Endothelial cell of umbilical vein (primary cell): ENCODE measurements at regions of chrX and their contacts with region 1.

Region 1: DNA sequence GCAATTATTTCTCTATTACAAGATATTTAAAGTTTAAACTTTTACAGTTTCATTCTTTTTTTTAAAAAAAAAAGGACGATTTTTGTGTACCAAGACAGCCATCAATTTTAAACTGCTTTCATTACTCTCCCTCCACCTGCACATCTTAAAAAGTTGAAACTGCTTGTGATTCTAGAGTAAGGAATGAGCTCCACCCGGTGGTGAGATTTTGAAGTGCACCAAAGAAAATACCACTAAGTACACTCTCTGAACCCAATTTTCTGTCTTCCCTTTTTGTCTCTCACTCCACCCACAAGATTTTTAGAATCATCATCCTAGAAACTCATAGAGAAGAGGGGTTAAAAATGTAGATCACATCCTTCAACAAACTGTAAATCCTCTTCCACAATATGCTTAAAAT is 91.3 kb upstream of the WDR44 start:
- DNase-seq: peak; percentile 44
- H3K4me3 ChIP-seq: no peak overlapping the region
- H3K27ac ChIP-seq: no peak overlapping the region
- H3K4me1 ChIP-seq: no peaks in the 10 kb centered on the region
- H3K27me3 ChIP-seq: no peaks in the 10 kb centered on the region
- CTCF ChIP-seq: peak; percentile 13 to 50
- POLR2A ChIP-seq: no peak

Region 2: DNA sequence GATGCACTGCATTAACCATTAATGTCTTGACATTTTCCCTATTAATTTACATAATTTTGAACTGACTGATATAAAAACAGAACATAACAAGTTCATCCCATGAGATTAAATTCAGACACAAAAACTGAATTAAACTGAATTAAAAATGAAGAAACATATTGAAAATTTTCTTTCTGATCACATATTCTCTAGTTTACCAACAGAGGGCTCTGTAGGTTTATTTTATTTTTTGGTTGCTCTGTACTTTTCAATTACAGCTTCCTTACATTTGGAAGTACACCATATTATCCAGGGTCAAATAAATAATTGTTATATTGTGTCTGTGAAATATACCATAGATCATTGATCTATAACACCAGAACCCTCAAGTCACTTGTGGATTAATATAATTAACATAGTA is 1764.5 kb before region 1 on chrX:
- CTCF ChIA-PET with region 1: interaction called, 37 read pairs
- POLR2A ChIA-PET with region 1: no interaction called
- dilution Hi-C with region 1: no loop called
- intact Hi-C with region 1: loop called (anchors 1 kb)
- DNase-seq: peak; percentile 1
- H3K4me3 ChIP-seq: no peak overlapping the region
- H3K27ac ChIP-seq: no peak overlapping the region
- H3K4me1 ChIP-seq: no peaks in the 10 kb centered on the region
- H3K27me3 ChIP-seq: no peaks in the 10 kb centered on the region
- CTCF ChIP-seq: no peak
- POLR2A ChIP-seq: no peak

Region 3: DNA sequence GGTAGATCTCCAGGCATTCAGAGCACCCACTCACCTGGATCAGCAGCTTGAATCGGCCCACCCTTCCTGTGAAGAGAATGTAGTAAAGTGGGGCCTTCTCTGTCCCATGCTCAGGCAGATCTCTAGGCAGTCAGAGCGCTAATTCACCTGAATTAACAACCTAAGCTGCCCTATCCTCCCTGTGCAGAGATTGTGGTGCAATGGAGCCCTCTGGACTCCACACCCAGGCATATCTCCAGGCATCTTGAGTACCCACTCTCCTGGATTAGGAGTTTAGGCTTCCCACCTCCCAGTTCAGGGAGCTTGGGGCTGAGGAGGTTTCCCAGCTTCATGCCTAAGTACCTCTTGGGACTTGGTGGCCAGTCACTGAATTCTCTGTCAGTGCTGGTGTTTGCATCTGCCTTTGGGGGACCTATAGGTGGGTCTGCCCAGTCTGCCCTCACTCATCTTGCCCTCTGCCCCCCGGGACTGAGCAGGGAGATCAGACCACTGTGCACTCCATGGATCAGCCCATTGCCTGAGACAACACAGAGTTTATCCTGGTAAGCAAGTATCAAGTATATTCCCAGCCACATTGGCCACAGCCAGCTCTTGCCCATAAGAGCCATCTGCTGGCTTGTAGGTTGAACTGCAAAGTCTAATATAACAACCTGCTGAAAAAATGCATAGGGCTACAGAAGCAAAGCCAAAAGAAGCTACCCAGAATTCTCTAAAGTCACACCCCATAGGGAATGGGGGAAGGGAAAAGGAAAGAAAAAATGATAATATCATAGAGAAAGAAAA is 511.0 kb before region 1 on chrX:
- CTCF ChIA-PET with region 1: no interaction called
- POLR2A ChIA-PET with region 1: no interaction called
- dilution Hi-C with region 1: no loop called
- intact Hi-C with region 1: no loop called
- DNase-seq: no peak
- H3K4me3 ChIP-seq: no peak overlapping the region
- H3K27ac ChIP-seq: no peak overlapping the region
- H3K4me1 ChIP-seq: no peaks in the 10 kb centered on the region
- H3K27me3 ChIP-seq: no peaks in the 10 kb centered on the region
- CTCF ChIP-seq: no peak
- POLR2A ChIP-seq: no peak

Region 4: DNA sequence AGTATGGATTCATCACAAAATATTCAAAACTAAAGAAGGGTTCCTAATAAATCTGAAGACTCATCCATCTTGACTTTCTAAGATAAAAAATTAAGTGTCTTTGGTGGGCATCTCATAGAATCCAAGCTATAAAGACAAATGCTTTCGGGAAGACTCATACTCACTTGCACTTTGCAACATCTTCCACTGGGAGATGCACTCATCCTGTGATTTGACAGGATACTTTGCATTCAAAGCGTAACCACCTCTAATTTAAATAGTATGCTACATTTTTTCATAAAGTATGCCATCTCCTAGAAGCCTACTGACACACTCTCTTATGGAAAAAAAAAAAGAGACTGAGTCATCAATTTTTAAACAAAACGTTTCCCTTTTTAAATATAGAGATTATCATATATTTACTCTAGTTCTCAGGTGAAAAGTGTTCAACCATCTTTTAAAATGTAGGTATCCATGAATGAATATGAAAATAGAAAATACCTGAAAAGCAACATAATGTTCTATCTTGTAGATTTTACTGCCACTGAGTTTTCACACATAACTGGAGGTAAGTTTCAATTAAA is 257.6 kb before region 1 on chrX:
- CTCF ChIA-PET with region 1: interaction called, 16 read pairs
- POLR2A ChIA-PET with region 1: no interaction called
- dilution Hi-C with region 1: no loop called
- intact Hi-C with region 1: loop called (anchors 2 kb)
- DNase-seq: peak; percentile 11
- H3K4me3 ChIP-seq: no peak overlapping the region
- H3K27ac ChIP-seq: no peak overlapping the region
- H3K4me1 ChIP-seq: no peaks in the 10 kb centered on the region
- H3K27me3 ChIP-seq: no peaks in the 10 kb centered on the region
- CTCF ChIP-seq: peak in 1 of 2 donors; percentile 6
- POLR2A ChIP-seq: no peak